Right ventricle myocardium inferior (tissue), 1 donor: ENCODE measurements at regions of chr12 and their contacts with region 1.

Region 1: GRCh38 chr12:50174971-50175715 is 8.0 kb upstream of the CERS5 start:
- DNase-seq: no peak
- ATAC-seq: no peak

Region 2: GRCh38 chr12:49967042-49967776 is 207.9 kb before region 1 on chr12:
- intact Hi-C with region 1: loop called (anchors 5 kb)
- DNase-seq: peak; percentile 96
- ATAC-seq: peak; percentile 82

Region 3: DNA sequence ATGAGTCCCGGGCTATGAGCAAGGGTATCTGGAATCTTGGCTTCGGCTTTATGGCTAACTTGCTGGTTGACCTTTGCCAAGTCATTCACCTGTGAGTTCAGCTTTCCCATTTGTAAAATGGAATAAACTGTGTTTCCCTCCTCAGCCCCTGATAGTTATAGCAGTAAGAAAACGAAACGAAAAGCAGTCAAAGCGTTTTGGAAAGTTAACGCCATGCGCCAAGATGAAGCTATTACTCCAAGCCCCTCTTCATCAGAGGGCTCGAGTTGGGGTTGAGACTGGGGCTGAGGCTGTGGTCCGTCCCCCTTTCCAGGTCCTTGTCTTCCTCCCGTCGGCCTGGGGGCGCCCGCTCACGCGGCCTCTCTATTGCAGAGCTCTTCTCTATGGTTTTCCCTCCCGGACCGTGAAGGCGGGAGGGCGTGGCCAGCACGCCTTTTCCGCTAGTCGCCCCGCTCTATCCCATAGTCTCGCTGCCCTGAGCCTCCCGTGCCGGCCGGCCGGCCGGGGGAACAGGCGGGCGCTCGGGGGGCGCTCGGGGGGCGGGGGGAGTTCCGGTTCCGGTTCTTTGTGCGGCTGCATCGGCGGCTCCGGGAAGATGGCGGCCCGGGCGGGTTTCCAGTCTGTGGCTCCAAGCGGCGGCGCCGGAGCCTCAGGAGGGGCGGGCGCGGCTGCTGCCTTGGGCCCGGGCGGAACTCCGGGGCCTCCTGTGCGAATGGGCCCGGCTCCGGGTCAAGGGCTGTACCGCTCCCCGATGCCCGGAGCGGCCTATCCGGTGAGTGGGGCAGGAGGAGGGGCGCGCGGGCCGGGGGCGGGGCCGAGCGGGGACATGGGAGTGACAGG is 90.1 kb before region 1 on chr12 and contains the start of gene SMARCD1:
- intact Hi-C with region 1: loop called (anchors 2 kb)
- DNase-seq: peak; percentile 96
- ATAC-seq: peak; percentile 95
- total RNA-seq, gene SMARCD1: 20.1 TPM